Adrenal gland (tissue), 19 donors: ENCODE measurements at regions of chr3 and their contacts with region 1.

Region 1: GRCh38 chr3:46629551-46630517 is 17.5 kb downstream of the FAM240A start:
- DNase-seq: peak; percentile 73 to 86 (median 80)
- H3K4me3 ChIP-seq: no peak overlapping the region
- H3K27ac ChIP-seq: peak overlapping the region in 2 of 5 donors; percentile 27 to 30
- H3K4me1 ChIP-seq: peaks cover 0 to 8% of the 10 kb centered on the region in 2 donors
- H3K27me3 ChIP-seq: peaks cover 2% of the 10 kb centered on the region
- CTCF ChIP-seq: peak; percentile 91 to 99 (median 96)
- POLR2A ChIP-seq: no peak

Region 2: GRCh38 chr3:46488735-46489361 is 141.0 kb before region 1 on chr3:
- intact Hi-C with region 1: loop called (anchors 2 to 5 kb)
- DNase-seq: peak; percentile 85 to 94 (median 90)
- H3K4me3 ChIP-seq: no peak overlapping the region
- H3K27ac ChIP-seq: no peak overlapping the region
- H3K4me1 ChIP-seq: no peaks in the 10 kb centered on the region
- H3K27me3 ChIP-seq: no peaks in the 10 kb centered on the region
- CTCF ChIP-seq: peak; percentile 79 to 99 (median 98)
- POLR2A ChIP-seq: no peak